Calu3 (cell line): ENCODE measurements at regions of chr5 and their contacts with region 1.

Region 1: GRCh38 chr5:178207183-178207916 is 3.0 kb downstream of the HNRNPAB start:
- DNase-seq: peak; percentile 38
- H3K4me3 Mint-ChIP-seq: peak overlapping the region; percentile 85
- H3K27ac Mint-ChIP-seq: peak overlapping the region; percentile 86
- H3K4me1 Mint-ChIP-seq: peaks cover 40% of the 10 kb centered on the region
- H3K27me3 Mint-ChIP-seq: peaks cover 12% of the 10 kb centered on the region
- CTCF ChIP-seq: no peak

Region 2: GRCh38 chr5:178120868-178121357 is 86.4 kb before region 1 on chr5:
- CTCF ChIA-PET with region 1: no interaction called
- intact Hi-C with region 1: no loop called
- DNase-seq: peak; percentile 58
- H3K4me3 Mint-ChIP-seq: no peak overlapping the region
- H3K27ac Mint-ChIP-seq: no peak overlapping the region
- H3K4me1 Mint-ChIP-seq: peaks cover 22% of the 10 kb centered on the region
- H3K27me3 Mint-ChIP-seq: no peaks in the 10 kb centered on the region
- CTCF ChIP-seq: peak; percentile 35

Region 3: GRCh38 chr5:178196281-178196812 is 11.0 kb before region 1 on chr5:
- CTCF ChIA-PET with region 1: interaction called, 15 read pairs
- intact Hi-C with region 1: no loop called
- DNase-seq: no peak
- H3K4me3 Mint-ChIP-seq: no peak overlapping the region
- H3K27ac Mint-ChIP-seq: no peak overlapping the region
- H3K4me1 Mint-ChIP-seq: no peaks in the 10 kb centered on the region
- H3K27me3 Mint-ChIP-seq: peaks cover 46% of the 10 kb centered on the region
- CTCF ChIP-seq: no peak